Aorta (tissue), 5 donors: ENCODE measurements at regions of chr9 and their contacts with region 1.

Region 1: DNA sequence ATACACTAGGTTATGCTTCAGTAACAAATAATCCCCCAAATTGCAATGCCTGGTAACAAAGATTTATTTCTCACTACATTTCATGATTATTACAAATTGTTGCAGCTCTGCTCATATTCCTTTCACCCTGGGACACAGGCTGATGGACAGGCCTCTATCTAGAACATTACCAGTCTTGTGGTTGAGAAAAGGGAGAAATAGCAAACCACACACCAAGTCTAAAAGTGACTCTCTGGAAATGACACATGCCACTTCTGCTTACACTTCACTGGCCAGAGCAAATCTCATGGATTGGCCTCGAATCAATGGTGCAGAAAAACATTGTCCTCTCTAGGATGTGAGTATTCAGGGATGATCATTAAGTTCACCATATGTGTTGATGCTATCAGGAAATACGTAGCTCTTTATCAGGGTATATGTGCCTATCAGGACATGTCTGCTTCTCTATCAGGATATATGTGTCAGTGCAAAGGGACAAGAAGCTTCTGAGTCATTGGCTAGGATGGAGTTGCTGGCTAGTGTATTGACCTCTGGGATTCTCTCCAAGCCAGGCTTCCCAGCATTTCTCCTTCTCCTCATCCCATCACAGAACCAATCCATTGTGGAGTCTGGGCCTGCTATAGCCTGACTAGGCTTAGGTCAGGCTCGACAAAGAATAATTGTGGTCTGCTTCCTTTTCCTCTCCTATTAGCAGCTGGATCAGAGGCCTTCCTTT is 91.1 kb upstream of the CEP78 start:
- DNase-seq: no peak
- ATAC-seq: peak; percentile 71
- H3K4me3 ChIP-seq: no peak overlapping the region
- H3K27ac ChIP-seq: no peak overlapping the region
- H3K4me1 ChIP-seq: no peaks in the 10 kb centered on the region
- H3K27me3 ChIP-seq: no peaks in the 10 kb centered on the region

Region 2: GRCh38 chr9:78089101-78089500 is 55.7 kb before region 1 on chr9:
- intact Hi-C with region 1: loop called in 1 of 2 experiments (anchors 10 kb)
- DNase-seq: no peak
- ATAC-seq: no peak
- H3K4me3 ChIP-seq: no peak overlapping the region
- H3K27ac ChIP-seq: no peak overlapping the region
- H3K4me1 ChIP-seq: no peaks in the 10 kb centered on the region
- H3K27me3 ChIP-seq: no peaks in the 10 kb centered on the region